Lower leg skin (tissue), 4 donors: ENCODE measurements at regions of chrX and their contacts with region 1.

Region 1: GRCh38 chrX:123833387-123833786 is 26.5 kb upstream of the XIAP start:
- DNase-seq: peak in 1 of 2 donors; percentile 26
- H3K4me3 ChIP-seq: no peak overlapping the region
- CTCF ChIP-seq: no peak
- POLR2A ChIP-seq: no peak

Region 2: GRCh38 chrX:123324625-123325024 is 508.8 kb before region 1 on chrX:
- intact Hi-C with region 1: loop called (anchors 5 kb)
- DNase-seq: no peak
- H3K4me3 ChIP-seq: no peak overlapping the region
- CTCF ChIP-seq: no peak
- POLR2A ChIP-seq: no peak

Region 3: DNA sequence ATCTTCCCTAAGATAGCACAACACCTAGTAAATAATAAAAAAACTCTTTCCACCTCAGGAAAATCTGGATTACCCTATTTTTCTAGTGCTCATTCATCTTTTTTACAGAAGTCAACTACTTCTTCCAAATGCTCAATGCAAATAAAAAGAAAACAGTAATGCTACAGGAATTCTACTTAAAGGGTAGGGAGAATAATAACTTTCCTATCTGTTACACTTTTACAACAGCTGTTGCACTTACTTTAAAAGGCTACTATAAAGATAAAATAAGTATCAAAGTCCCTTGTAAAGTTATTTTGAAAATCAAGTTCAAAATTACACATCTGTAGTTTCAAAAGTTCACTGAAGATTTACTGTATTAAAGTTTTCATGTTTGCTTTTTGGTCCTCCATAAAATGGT is 138.1 kb before region 1 on chrX:
- intact Hi-C with region 1: no loop called
- DNase-seq: no peak
- H3K4me3 ChIP-seq: no peak overlapping the region
- CTCF ChIP-seq: no peak
- POLR2A ChIP-seq: no peak

Region 4: DNA sequence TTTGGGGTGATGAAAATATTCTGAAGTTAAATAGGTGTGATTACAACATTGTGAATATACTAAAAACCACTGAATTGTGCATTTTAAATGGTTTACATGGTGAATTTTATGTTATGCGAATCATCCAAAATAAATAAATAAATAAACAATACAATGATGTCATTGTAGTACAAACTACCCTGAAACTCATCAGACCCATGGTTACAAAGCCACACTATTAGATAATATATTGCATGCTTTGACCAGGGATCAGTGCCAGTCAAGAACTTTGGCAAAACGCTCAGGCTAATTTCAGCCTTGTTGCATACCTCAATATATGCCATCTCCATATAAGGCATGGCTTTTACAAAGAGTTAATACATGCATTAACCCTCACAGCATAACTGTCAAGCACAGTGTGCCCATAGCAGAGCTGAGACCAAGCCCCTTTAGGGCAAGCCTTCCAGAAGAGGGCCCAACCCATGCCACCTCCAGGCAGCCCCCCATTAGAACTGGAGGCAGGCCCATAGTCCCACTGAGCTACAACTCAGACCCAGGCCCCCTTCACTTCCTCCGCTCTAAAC is 19.0 kb before region 1 on chrX:
- intact Hi-C with region 1: no loop called
- DNase-seq: no peak
- H3K4me3 ChIP-seq: no peak overlapping the region
- CTCF ChIP-seq: no peak
- POLR2A ChIP-seq: no peak

Region 5: DNA sequence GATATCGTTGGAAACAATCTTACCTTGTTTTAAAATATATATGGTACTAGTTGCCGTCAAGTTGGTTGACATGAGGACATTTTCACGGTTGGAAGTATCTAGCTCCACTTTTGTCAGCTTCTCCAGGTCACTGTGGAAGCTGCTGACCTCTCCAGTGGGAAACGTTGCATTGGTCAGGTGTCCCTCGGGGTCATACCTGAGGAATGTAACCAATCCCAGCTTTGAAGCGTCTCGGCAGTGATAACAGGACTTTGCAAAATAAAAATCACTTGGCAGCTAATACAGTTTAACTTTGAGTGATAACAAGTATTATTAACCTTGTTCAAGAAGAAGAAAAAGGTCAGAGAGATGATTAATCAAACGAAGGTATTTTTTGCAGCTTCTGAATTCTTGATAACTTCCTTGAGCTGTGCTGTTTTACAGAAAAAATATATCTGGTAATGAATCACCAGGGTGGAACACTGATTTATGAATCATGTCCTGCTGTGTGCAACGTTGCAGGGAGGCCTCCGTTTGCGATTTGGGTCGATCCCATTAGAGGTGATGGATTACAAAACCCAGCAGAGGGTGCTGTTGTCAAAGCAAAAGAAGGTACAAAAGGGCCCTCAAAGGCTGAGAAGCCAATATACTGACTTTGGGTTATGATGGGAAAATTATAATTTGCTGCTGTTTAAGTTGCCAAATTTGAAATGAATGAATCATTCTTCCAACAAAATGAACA is 573.1 kb after region 1 on chrX:
- intact Hi-C with region 1: no loop called
- DNase-seq: peak in 1 of 2 donors; percentile 44
- H3K4me3 ChIP-seq: no peak overlapping the region
- CTCF ChIP-seq: no peak
- POLR2A ChIP-seq: no peak

Region 6: DNA sequence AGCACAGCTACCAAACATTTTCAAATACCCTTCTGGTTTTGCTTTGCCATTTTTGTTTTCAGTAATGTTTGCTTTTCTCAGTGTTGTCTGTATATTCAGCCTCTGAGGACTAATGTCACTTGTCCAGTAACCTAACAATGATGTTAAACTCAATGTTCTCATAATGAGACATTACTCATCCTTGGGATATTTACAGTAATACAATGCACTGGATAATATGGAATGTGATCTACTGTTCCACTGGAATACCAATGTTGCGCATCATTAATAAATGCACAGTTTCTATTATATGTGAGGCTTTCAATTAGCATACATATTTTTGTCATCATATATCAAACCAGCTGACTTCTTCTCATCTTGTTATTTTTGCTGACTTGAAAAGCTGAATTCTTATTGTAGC is 772.1 kb after region 1 on chrX:
- intact Hi-C with region 1: no loop called
- DNase-seq: no peak
- H3K4me3 ChIP-seq: no peak overlapping the region
- CTCF ChIP-seq: no peak
- POLR2A ChIP-seq: no peak